ENCODE measurements at regions of chr12 and their contacts with region 1.

Region 1: GRCh38 chr12:54220092-54220557 is 31.3 kb upstream of the SMUG1 start:
- H3K4me3 Mint-ChIP-seq: no peak overlapping the region
- H3K27ac Mint-ChIP-seq: no peak overlapping the region
- H3K4me1 Mint-ChIP-seq: peaks cover 20% of the 10 kb centered on the region
- H3K27me3 Mint-ChIP-seq: peaks cover 39% of the 10 kb centered on the region

Region 2: GRCh38 chr12:54360717-54361456 is 140.8 kb after region 1 on chr12:
- intact Hi-C with region 1: loop called (anchors 5 kb)
- H3K4me3 Mint-ChIP-seq: no peak overlapping the region
- H3K27ac Mint-ChIP-seq: peak overlapping the region; percentile 62
- H3K4me1 Mint-ChIP-seq: peaks cover 39% of the 10 kb centered on the region
- H3K27me3 Mint-ChIP-seq: no peaks in the 10 kb centered on the region

Measured in dendritic cell treated with granulocyte-macrophage colony-stimulating factor and Interleukin-4, amounts not matched to agents 40 ng/mL and 50 ng/mL, for 4 days (primary cell).